Tibial artery (tissue), 4 donors: ENCODE measurements at regions of chr1 and their contacts with region 1.

Region 1: DNA sequence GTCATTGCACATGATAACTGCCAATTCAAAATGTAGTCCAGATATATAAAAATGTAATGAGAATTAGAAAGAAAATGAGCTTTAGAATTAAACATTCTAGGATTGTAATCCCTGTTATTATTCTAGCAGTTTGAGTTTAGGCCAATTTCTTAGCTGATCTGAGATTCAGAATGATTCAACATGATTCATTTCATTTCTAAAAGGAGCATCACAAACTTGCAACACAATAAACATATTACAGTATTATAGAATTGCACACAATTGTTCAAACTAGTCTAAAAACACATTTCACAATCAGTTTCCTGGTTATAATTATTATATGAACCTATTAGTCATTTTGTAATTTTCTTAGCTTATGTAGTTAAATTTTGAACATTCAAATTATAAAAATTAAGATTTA is 43.3 kb upstream of the TSHB start:
- DNase-seq: no peak
- H3K4me3 ChIP-seq: no peak overlapping the region
- H3K27ac ChIP-seq: no peak overlapping the region
- H3K4me1 ChIP-seq: no peaks in the 10 kb centered on the region
- H3K27me3 ChIP-seq: no peaks in the 10 kb centered on the region
- CTCF ChIP-seq: no peak

Region 2: DNA sequence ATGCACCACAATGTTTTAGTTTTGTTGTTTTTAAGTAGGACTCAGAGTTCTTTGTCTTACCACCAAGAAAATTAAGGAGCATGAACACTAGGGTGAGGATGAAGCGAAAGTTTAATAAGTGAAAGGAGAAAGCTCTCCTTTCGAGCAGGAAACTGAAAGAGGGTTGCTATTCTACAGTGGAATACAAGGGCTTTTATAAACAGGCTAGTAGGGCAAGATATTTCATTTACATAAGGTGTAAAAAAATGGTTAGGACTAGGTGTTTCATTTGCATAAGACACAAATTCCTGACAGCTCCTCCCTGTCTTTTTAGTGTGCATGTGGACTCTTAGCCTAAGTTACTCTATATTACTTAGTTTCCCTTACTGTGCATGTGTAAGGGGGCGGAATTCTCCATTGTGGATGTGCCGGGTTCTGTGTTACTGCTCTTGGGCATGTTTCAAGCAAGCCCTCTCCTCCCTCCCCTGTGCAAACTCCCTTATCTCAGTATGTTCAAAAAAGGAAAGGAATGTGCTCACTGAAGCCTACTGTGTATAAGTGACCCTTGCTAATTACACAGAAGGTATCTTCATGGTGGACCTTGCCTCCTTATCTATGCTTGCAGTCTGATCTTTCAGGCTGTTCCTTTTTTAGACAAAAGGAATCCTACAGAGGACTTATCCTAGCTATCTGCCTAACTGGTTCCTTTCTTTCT is 50.7 kb after region 1 on chr1:
- intact Hi-C with region 1: loop called (anchors 10 kb)
- DNase-seq: no peak
- H3K4me3 ChIP-seq: no peak overlapping the region
- H3K27ac ChIP-seq: peak overlapping the region in 1 of 2 donors; percentile 32
- H3K4me1 ChIP-seq: peaks cover 0 to 14% (median 8%) of the 10 kb centered on the region in 4 donors
- H3K27me3 ChIP-seq: no peaks in the 10 kb centered on the region
- CTCF ChIP-seq: no peak

Region 3: DNA sequence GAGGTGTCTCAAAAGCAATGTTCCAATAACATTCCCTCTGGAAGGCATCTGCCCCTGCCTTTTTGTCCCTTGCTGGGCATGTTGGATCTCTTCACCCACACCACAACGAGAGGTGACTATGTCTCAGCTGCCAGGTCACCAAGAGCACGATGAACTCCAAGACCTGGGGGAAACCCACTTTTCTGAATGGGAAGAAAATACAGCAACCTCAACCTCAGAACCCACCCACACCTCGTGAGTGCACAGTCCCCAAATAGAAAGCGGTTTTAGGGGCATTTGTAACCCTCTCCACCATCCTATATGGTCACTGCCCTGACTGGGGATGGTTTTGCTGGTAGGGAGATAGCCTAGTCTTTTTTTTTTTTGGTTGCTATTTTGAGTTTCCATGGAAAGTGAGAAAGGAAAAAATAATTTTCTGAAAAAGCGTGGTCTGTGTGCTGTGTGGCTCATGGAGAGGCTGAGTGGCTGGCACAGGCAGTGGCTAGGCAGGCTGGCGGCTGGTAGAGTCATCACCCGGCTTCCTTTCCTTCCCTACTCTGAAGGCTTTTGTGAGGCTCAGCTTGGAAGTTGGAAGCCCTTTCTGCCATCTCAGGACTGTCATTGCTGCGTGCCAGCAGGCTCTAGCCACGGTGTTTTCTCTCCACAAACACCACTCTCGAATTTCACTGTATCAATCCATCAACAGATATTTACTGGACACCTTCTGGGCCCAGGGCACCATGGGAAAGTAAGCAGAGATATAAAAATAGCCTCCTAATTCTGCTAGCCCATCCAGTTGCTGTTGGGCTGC is 87.2 kb after region 1 on chr1:
- intact Hi-C with region 1: no loop called
- DNase-seq: peak in 1 of 2 donors; percentile 78
- H3K4me3 ChIP-seq: peak overlapping the region; percentile 25
- H3K27ac ChIP-seq: peak overlapping the region; percentile 71 to 84
- H3K4me1 ChIP-seq: peaks cover 0 to 87% (median 50%) of the 10 kb centered on the region in 4 donors
- H3K27me3 ChIP-seq: no peaks in the 10 kb centered on the region
- CTCF ChIP-seq: no peak

Region 4: DNA sequence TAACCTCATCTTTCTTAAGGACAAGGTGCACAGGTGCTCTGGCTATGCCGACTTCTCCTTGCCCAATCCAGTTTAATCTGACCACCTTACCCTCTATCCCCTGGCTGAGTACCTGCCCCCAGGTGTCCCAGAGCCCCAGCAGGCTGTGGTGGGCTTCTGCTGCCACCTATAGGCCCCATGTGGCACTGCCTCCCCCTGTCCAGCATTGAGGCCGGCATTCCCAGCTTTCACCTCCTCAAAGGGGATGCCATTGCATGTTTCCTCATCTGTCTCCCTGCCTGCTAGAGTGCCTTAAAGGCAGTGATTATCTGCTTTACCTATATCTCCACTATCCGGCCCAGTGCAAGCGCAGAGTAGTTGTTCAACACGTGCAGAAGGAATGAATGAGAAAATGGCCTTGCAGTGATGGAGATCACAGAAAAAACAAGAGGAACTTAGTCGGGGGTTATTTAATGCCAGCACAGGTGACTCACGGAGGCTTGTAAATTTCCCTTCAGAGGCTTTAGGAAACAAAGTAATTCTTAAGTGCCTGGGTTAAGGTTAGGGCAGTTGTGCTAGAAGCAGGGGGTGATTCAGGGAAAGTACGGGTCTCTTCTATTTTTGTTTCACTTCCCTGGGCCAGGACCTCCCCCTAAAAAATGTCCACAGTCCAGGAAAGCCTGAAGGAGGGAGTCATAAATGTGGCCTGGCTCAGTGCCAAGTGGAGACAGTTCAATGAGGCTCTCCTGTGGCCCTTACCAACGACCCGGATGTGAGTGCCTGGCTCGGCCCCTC is 483.6 kb after region 1 on chr1:
- intact Hi-C with region 1: loop called (anchors 10 kb)
- DNase-seq: no peak
- H3K4me3 ChIP-seq: no peak overlapping the region
- H3K27ac ChIP-seq: no peak overlapping the region
- H3K4me1 ChIP-seq: no peaks in the 10 kb centered on the region
- H3K27me3 ChIP-seq: no peaks in the 10 kb centered on the region
- CTCF ChIP-seq: peak; percentile 85 to 93